Activated naive CD4-positive, alpha-beta T cell treated with anti-CD3 and anti-CD28 coated beads for 36 hours (primary cell): ENCODE measurements at regions of chr18 and their contacts with region 1.

Region 1: GRCh38 chr18:72652990-72653593 is 109.0 kb upstream of the CBLN2 start:
- DNase-seq: peak; percentile 71
- H3K4me3 Mint-ChIP-seq: no peak overlapping the region
- H3K27ac Mint-ChIP-seq: no peak overlapping the region
- H3K4me1 Mint-ChIP-seq: no peaks in the 10 kb centered on the region
- H3K27me3 Mint-ChIP-seq: peaks cover 2% of the 10 kb centered on the region

Region 2: GRCh38 chr18:72672364-72673184 is 19.5 kb after region 1 on chr18:
- CTCF ChIA-PET with region 1: no interaction called
- intact Hi-C with region 1: loop called (anchors 1 kb)
- DNase-seq: peak; percentile 15
- H3K4me3 Mint-ChIP-seq: no peak overlapping the region
- H3K27ac Mint-ChIP-seq: no peak overlapping the region
- H3K4me1 Mint-ChIP-seq: no peaks in the 10 kb centered on the region
- H3K27me3 Mint-ChIP-seq: peaks cover 10% of the 10 kb centered on the region

Region 3: GRCh38 chr18:73842795-73843394 is 1189.8 kb after region 1 on chr18:
- CTCF ChIA-PET with region 1: no interaction called
- intact Hi-C with region 1: loop called (anchors 5 kb)
- DNase-seq: peak; percentile 57
- H3K4me3 Mint-ChIP-seq: no peak overlapping the region
- H3K27ac Mint-ChIP-seq: no peak overlapping the region
- H3K4me1 Mint-ChIP-seq: peaks cover 4% of the 10 kb centered on the region
- H3K27me3 Mint-ChIP-seq: peaks cover 6% of the 10 kb centered on the region